ENCODE measurements at regions of chr3 and their contacts with region 1.

Region 1: DNA sequence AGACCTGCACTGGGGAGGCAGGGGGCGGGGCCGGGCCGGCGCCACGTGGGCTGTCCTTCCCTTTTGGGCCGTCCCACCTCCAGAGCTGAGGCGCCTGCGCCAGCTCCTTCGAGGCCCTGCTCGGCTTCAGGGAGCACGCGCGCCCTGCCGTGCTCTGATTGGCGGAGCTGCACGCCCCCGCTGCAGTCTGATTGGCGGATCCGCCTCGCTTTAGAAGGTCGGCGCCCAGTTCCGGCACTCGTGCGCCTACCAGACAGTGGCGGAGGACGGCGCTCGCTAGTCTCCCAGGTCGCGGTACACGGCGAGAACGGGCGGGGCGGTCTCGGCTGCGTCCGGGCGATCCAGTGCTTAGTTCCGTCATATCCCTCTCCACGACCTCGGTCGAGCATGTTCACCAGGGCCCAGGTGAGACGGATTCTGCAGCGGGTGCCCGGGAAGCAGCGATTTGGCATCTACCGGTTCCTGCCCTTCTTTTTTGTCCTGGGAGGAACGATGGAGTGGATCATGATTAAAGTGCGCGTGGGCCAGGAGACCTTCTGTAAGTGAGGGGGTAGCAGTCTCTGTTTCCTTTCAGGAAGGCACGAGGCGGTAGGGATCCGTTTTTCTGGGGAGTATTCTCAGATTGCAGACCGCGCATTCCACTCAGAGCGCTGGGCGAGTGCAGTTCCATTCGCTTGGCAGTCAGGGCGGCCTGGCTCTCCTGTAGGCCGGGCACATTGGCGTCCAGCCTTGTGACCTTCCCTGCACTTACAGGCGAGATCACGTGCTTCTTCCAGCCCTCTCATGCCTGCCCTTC is at the start of gene UQCC5:
- DNase-seq: peak; percentile 96 to 98 (median 97)
- H3K4me3 ChIP-seq: peak within 1 kb of the TSS; percentile 60
- H3K27ac ChIP-seq: peak within 1 kb of the TSS in 1 of 2 donors; percentile 16
- H3K4me1 ChIP-seq: peaks cover 25% of the 10 kb centered on the region
- H3K27me3 ChIP-seq: no peaks in the 10 kb centered on the region
- CTCF ChIP-seq: no peak
- EP300 ChIP-seq: no peak
- POLR2A ChIP-seq: peak; percentile 98
- total RNA-seq, gene UQCC5: 1.4 to 44.7 (median 27.4) TPM

Region 2: DNA sequence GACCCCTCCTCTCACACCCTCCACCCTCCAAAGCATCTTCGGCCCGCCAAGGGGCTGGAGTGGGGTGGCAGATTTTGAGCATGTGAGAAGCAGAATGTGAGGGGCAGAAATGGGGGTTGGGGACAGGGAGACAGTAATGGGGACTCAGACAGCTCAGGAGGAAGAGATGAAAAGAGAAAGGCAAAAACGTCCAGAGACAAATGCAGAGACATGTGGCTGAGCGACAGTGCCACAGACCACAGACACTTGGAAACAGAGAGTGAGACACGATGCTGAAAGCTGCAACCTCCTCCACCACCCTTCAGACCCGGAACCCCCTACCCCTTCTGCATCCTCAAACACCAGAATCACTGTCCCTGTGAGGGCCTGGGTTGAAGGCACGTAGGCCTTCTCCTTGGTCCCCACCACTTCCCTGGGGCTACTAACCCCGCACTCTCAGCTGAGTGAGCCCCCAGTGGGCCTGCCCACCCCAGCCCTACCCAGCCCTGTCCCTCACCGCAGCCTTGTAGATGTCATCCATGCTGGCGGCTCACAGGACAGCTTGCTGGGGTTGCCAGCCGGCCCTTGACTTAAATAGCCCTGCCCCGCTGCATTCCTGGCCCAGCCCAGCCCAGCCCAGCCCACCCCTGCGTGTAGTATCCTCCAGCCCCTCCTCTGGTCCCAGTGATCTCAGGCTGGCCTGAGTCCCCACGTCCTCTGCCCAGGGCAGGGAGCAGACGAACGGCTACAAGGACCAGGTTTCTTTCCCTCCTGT is 82.9 kb before region 1 on chr3 and contains the start of gene TNNC1:
- intact Hi-C with region 1: loop called in 1 of 4 experiments (anchors 5 kb)
- DNase-seq: no peak
- H3K4me3 ChIP-seq: peak within 1 kb of the TSS; percentile 75
- H3K27ac ChIP-seq: peak within 1 kb of the TSS in 1 of 2 donors; percentile 87
- H3K4me1 ChIP-seq: peaks cover 12% of the 10 kb centered on the region
- H3K27me3 ChIP-seq: no peaks in the 10 kb centered on the region
- CTCF ChIP-seq: no peak
- EP300 ChIP-seq: no peak
- POLR2A ChIP-seq: no peak
- total RNA-seq, gene TNNC1: 0.31 to 2.3 (median 0.88) TPM

Region 3: GRCh38 chr3:52518720-52519444 is 17.7 kb before region 1 on chr3:
- intact Hi-C with region 1: no loop called
- DNase-seq: peak in 4 of 5 donors; percentile 50 to 71 (median 60)
- H3K4me3 ChIP-seq: peak overlapping the region; percentile 32
- H3K27ac ChIP-seq: no peak overlapping the region
- H3K4me1 ChIP-seq: peaks cover 7% of the 10 kb centered on the region
- H3K27me3 ChIP-seq: no peaks in the 10 kb centered on the region
- CTCF ChIP-seq: no peak
- EP300 ChIP-seq: no peak
- POLR2A ChIP-seq: no peak

Region 4: DNA sequence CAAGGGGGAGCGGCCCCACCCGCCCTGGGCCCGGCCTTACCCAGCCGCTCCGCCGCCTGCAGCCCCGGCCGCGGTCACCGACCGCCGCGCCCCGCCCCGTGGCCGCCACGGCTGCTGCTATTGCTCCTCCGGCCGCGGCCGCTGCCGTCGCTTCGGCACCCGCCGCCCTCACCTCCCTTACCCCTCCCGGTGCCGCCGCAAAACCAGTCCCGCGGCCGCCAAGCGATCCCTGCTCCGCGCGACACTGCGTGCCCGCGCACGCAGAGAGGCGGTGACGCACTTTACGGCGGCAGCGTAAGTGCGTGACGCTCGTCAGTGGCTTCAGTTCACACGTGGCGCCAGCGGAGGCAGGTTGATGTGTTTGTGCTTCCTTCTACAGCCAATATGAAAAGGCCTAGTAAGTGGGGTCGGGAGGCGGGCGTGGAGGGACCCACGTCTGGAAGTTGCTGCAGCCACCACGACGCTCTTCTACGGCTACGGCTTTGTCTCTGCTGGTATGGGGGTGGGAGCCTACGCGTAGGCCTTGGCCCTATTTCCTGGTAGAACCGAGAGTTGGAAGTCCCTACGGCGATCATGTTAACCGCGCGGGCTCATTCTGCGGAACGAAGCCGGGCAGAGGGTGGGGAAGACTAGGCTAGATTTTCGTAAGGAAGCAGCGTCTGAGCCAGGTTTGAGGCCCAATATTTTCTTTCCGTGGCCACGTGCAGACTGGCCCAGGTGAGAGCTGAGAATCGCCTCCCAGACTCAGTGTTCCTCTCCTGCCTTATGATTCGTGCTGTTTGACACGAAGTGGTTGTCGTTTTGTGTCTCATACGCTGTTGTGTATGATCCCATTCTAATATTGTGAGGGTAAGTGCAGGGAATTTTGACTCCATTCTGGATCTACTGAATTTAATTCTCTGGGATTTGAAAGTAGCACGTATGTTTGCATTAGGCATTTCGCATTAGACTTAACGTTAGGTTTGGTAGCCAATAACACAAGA is 149.4 kb after region 1 on chr3 and contains the starts of genes GNL3 and PBRM1:
- intact Hi-C with region 1: loop called in 1 of 4 experiments (anchors 10 kb)
- DNase-seq: peak; percentile 92 to 95 (median 93)
- H3K4me3 ChIP-seq: peak within 1 kb of the TSS; percentile 84
- H3K27ac ChIP-seq: peak within 1 kb of the TSS; percentile 95 to 99
- H3K4me1 ChIP-seq: peaks cover 7% of the 10 kb centered on the region
- H3K27me3 ChIP-seq: no peaks in the 10 kb centered on the region
- CTCF ChIP-seq: peak in 1 of 3 donors; percentile 25
- EP300 ChIP-seq: peak; percentile 36
- POLR2A ChIP-seq: peak; percentile 88
- total RNA-seq, gene GNL3: 46.0 to 82.7 (median 62.7) TPM
- total RNA-seq, gene PBRM1: 63.2 to 95.7 (median 69.7) TPM

Region 5: GRCh38 chr3:52705688-52706686 is 169.4 kb after region 1 on chr3 and contains the starts of genes GLT8D1 and SPCS1:
- intact Hi-C with region 1: loop called in 1 of 4 experiments (anchors 10 kb)
- DNase-seq: peak; percentile 83 to 92 (median 88)
- H3K4me3 ChIP-seq: peak within 1 kb of the TSS; percentile 77
- H3K27ac ChIP-seq: peak within 1 kb of the TSS in 1 of 2 donors; percentile 84
- H3K4me1 ChIP-seq: peaks cover 9% of the 10 kb centered on the region
- H3K27me3 ChIP-seq: no peaks in the 10 kb centered on the region
- CTCF ChIP-seq: peak in 1 of 3 donors; percentile 34
- EP300 ChIP-seq: no peak
- POLR2A ChIP-seq: peak; percentile 63
- total RNA-seq, gene GLT8D1: 42.3 to 67.8 (median 57.4) TPM
- total RNA-seq, gene SPCS1: 67.7 to 104 (median 80.3) TPM